ENCODE measurements at regions of chr19 and their contacts with region 1.

Region 1: GRCh38 chr19:737581-738093 is 13.3 kb upstream of the MISP start:
- DNase-seq: peak; percentile 67
- ATAC-seq: peak; percentile 76
- H3K4me3 Mint-ChIP-seq: no peak overlapping the region
- H3K27ac Mint-ChIP-seq: no peak overlapping the region
- H3K4me1 Mint-ChIP-seq: peaks cover 2% of the 10 kb centered on the region
- H3K27me3 Mint-ChIP-seq: peaks cover 1% of the 10 kb centered on the region
- CTCF ChIP-seq: peak; percentile 66

Region 2: DNA sequence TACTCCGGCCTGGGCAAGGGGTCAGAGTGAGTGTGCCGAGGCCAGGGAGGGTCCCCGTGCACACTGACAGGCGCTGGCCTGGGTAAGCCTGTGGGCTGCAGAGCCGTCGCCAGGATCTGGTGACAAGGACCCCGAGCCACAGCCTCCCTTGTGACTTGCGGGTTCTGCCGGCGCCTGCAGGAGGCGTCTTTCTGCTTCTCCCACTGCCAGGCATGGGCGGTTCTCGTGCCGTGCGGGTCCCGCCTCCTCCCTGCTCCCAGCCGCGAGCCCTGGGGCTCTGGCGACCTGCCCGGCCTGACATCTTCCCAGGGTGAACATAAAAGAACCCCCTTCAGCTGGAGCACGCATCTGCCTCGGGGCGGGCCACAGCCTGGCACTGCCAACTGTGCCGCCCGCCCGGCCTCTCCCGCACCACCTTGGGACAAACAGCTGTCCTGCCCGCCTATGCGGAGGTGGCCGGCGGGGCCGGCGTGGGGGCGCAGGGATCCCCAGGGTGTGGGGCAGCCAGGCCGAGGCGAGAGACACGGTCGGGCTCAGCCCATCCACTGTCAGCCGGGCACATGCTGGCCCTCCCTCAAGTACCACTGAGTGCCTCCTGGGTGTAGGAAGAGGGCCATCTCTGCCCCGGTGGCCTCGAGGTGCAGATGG is 149.4 kb before region 1 on chr19:
- CTCF ChIA-PET with region 1: interaction called, 4 read pairs
- POLR2A ChIA-PET with region 1: no interaction called
- intact Hi-C with region 1: loop called (anchors 10 kb)
- DNase-seq: peak; percentile 84
- ATAC-seq: peak; percentile 80
- H3K4me3 Mint-ChIP-seq: no peak overlapping the region
- H3K27ac Mint-ChIP-seq: no peak overlapping the region
- H3K4me1 Mint-ChIP-seq: peaks cover 5% of the 10 kb centered on the region
- H3K27me3 Mint-ChIP-seq: peaks cover 21% of the 10 kb centered on the region
- CTCF ChIP-seq: peak; percentile 58

Region 3: GRCh38 chr19:662962-663681 is 74.5 kb before region 1 on chr19 and contains the start of gene RNF126:
- CTCF ChIA-PET with region 1: interaction called, 13 read pairs
- POLR2A ChIA-PET with region 1: no interaction called
- intact Hi-C with region 1: loop called (anchors 1 kb)
- DNase-seq: peak; percentile 92
- ATAC-seq: peak; percentile 72
- H3K4me3 Mint-ChIP-seq: peak within 1 kb of the TSS; percentile 95
- H3K27ac Mint-ChIP-seq: peak within 1 kb of the TSS; percentile 93
- H3K4me1 Mint-ChIP-seq: peaks cover 24% of the 10 kb centered on the region
- H3K27me3 Mint-ChIP-seq: peaks cover 2% of the 10 kb centered on the region
- CTCF ChIP-seq: no peak
- total RNA-seq, gene RNF126: 99.1 to 101 TPM

Region 4: DNA sequence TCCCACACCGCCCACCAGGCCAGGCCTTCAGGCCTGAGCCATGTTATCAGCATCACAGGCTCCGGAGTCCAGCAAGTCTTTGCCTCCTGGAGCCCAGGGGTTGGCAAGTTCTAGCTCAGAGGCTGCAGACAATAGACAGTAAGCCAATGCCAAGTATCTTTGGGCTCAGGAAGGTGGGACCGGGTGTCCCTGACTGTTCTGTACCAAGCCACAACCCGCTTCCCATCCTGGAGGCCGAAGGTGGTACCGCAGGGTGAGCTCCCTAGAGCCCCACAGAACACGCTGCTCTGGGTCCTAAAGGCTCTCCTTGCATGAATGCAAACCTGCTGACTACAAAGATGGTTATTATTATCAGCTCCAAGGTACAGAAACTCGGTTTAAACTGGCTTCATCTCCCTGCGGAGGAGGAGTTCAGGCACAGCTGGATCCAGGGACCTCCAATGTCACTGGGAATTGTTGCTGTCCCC is 67.0 kb before region 1 on chr19:
- CTCF ChIA-PET with region 1: interaction called, 10 read pairs
- POLR2A ChIA-PET with region 1: no interaction called
- intact Hi-C with region 1: no loop called
- DNase-seq: peak; percentile 35
- ATAC-seq: no peak
- H3K4me3 Mint-ChIP-seq: no peak overlapping the region
- H3K27ac Mint-ChIP-seq: no peak overlapping the region
- H3K4me1 Mint-ChIP-seq: peaks cover 2% of the 10 kb centered on the region
- H3K27me3 Mint-ChIP-seq: peaks cover 21% of the 10 kb centered on the region
- CTCF ChIP-seq: no peak

Region 5: GRCh38 chr19:690203-690990 is 47.2 kb before region 1 on chr19:
- CTCF ChIA-PET with region 1: no interaction called
- POLR2A ChIA-PET with region 1: no interaction called
- intact Hi-C with region 1: no loop called
- DNase-seq: no peak
- ATAC-seq: no peak
- H3K4me3 Mint-ChIP-seq: no peak overlapping the region
- H3K27ac Mint-ChIP-seq: no peak overlapping the region
- H3K4me1 Mint-ChIP-seq: peaks cover under 1% of the 10 kb centered on the region
- H3K27me3 Mint-ChIP-seq: peaks cover 5% of the 10 kb centered on the region
- CTCF ChIP-seq: no peak

Region 6: GRCh38 chr19:752652-753517 is 15.2 kb after region 1 on chr19:
- CTCF ChIA-PET with region 1: no interaction called
- POLR2A ChIA-PET with region 1: no interaction called
- intact Hi-C with region 1: no loop called
- DNase-seq: no peak
- ATAC-seq: no peak
- H3K4me3 Mint-ChIP-seq: no peak overlapping the region
- H3K27ac Mint-ChIP-seq: no peak overlapping the region
- H3K4me1 Mint-ChIP-seq: no peaks in the 10 kb centered on the region
- H3K27me3 Mint-ChIP-seq: peaks cover 2% of the 10 kb centered on the region
- CTCF ChIP-seq: no peak

Region 7: DNA sequence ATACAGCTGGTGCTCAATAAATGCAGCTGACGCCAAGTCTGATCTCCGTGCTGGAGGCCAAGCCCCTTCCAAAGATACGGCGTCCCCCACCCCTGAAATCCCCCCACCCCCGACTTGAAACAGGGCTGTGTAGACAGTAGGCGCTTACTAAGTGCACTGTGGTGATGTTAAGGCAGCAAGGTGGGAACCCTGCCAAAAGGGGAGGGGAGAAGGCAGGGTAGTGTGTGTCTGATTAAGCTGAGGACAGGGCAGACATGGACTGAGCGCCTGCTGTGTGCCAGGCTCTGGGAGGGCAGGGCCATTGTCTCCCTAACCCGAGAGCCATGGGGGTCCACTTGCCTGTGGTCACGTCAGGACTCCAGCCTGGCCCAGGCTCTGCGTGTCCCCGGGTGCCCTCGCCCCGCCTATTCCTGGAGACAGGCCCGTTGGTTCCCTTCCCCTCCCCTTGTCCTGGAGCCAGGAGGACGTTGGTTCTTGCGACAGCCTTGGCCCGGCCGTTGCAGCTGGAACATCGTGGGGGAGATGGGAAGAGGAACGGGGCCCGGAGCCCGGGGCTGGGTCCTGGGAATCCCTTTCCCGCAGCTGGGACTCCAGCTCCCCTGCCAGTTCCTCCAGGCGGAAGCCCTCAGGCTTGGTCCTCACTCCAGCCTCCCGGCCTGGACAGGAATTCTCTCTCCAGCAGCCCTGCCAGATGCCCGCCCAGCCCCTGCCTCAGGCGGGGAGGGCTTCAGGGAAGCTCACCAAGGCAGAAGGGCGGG is 112.8 kb after region 1 on chr19:
- CTCF ChIA-PET with region 1: no interaction called
- POLR2A ChIA-PET with region 1: no interaction called
- intact Hi-C with region 1: no loop called
- DNase-seq: peak; percentile 45
- ATAC-seq: peak; percentile 24
- H3K4me3 Mint-ChIP-seq: no peak overlapping the region
- H3K27ac Mint-ChIP-seq: no peak overlapping the region
- H3K4me1 Mint-ChIP-seq: no peaks in the 10 kb centered on the region
- H3K27me3 Mint-ChIP-seq: peaks cover 25% of the 10 kb centered on the region
- CTCF ChIP-seq: no peak